Activated B cell treated with CpG ODN at 0.5 μM for 24 hours (primary cell): ENCODE measurements at regions of chr17 and their contacts with region 1.

Region 1: DNA sequence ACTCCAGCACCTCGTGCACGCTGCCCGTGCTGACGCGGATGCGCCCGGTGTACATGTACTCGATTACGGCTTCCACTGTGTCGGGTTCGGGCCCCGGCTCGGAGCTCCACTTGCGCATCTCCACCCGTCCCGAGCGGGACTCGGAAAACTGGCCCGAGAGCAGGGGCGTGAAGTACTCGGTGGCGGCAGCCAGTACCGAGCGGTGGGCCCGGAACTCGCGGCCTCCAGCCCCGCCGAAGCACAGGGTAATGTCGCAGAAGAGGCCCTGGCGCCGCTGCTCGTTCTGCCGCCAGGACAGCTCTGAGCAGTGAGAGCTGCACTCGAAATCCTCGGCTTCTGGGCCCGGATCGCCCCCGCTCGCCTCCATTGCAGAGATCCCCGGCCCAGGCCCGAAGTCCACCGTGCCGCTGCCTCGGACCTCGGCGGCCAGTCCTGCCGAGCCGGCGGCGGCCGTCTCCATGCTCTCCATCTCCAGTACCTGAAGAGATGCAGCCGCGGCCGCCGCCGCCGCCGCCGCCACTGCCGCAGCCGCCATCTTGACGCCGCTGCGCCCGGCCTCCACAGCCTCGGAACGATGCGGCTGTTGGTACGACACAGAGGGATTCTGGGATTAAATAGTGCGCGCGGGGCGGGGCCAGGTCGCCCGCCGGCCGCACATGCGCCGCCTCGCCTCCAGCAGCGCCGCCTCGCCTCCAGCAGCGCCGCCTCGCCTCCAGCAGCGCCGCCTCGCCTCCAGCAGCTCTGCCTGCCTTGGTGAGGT is at the start of gene KLHL11:
- DNase-seq: peak; percentile 84
- ATAC-seq: peak; percentile 95
- H3K4me3 Mint-ChIP-seq: no peak within 1 kb of the TSS
- H3K27ac Mint-ChIP-seq: peak within 1 kb of the TSS; percentile 87
- H3K4me1 Mint-ChIP-seq: peaks cover 19% of the 10 kb centered on the region
- H3K27me3 Mint-ChIP-seq: no peaks in the 10 kb centered on the region
- CTCF ChIP-seq: no peak
- total RNA-seq, gene KLHL11: 13.6 and 17.3 TPM in 2 replicates

Region 2: DNA sequence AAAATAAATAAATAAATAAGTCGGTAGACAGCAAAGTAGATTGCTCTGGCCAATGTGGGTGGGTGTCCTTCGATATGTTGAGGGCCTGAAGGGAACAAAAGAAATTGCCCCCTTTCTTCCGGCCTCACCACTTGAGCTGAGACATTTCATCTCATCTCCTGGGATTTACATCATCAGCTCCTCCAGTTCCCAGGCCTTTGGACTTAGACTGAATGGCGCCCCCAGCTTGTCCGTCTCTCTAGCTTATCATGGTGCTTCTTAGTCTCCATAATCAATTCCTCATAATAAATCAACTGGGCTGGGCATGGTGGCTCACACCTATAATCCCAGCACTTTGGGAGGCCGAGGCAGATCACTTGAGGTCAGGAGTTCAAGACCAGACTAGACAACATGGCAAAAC is 116.7 kb before region 1 on chr17:
- CTCF ChIA-PET with region 1: no interaction called
- POLR2A ChIA-PET with region 1: no interaction called
- intact Hi-C with region 1: no loop called
- DNase-seq: no peak
- ATAC-seq: no peak
- H3K4me3 Mint-ChIP-seq: no peak overlapping the region
- H3K27ac Mint-ChIP-seq: no peak overlapping the region
- H3K4me1 Mint-ChIP-seq: no peaks in the 10 kb centered on the region
- H3K27me3 Mint-ChIP-seq: peaks cover 5% of the 10 kb centered on the region
- CTCF ChIP-seq: no peak

Region 3: GRCh38 chr17:41786227-41787020 is 78.6 kb before region 1 on chr17 and contains the start of gene JUP:
- CTCF ChIA-PET with region 1: no interaction called
- POLR2A ChIA-PET with region 1: interaction called, 8 read pairs
- intact Hi-C with region 1: loop called (anchors 2 kb)
- DNase-seq: peak; percentile 98
- ATAC-seq: peak; percentile 94
- H3K4me3 Mint-ChIP-seq: peak within 1 kb of the TSS; percentile 78
- H3K27ac Mint-ChIP-seq: peak within 1 kb of the TSS; percentile 75
- H3K4me1 Mint-ChIP-seq: peaks cover 57% of the 10 kb centered on the region
- H3K27me3 Mint-ChIP-seq: no peaks in the 10 kb centered on the region
- CTCF ChIP-seq: no peak
- total RNA-seq, gene JUP: 27.3 and 31.1 TPM in 2 replicates

Region 4: DNA sequence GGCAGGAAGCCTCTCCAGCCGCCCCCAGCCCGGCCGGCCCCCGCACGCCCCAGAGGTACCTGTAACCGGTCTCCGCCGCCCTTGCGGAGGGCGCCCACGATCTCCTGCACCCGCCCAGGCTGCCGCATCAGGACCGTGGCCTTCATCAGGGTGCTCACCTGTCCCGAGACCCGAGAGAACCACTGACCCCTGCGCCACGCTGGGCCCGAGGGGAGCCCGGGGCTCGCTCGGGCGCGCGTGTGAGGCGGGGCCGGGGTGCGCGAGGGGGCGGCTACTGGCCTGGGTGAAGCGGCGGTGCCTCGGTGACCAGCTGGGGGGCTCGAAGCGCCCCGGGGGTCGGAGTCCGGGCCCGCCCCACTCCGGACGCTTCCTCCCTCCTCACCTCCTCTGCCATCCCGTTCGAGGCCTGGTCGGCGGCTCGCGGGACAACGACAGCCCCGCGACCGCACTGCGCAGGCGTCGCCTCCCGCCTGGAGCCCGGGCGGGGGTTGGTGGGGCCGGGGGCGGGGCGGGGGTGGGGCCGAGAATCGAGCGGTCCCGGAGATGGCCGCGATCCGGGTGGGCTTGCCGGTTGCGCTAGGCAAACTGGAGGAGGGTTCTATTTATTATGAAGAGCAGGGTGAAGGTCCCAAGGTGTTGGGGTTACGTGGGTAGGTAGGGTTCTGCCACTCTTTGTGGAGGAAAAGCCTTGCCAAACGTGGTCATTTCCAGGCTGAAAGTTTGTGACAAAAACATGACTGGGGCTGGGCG is 29.0 kb before region 1 on chr17 and contains the start of gene NT5C3B:
- CTCF ChIA-PET with region 1: no interaction called
- POLR2A ChIA-PET with region 1: interaction called, 10 read pairs
- intact Hi-C with region 1: no loop called
- DNase-seq: peak; percentile 65
- ATAC-seq: peak; percentile 87
- H3K4me3 Mint-ChIP-seq: peak within 1 kb of the TSS; percentile 87
- H3K27ac Mint-ChIP-seq: peak within 1 kb of the TSS; percentile 41
- H3K4me1 Mint-ChIP-seq: peaks cover 13% of the 10 kb centered on the region
- H3K27me3 Mint-ChIP-seq: no peaks in the 10 kb centered on the region
- CTCF ChIP-seq: no peak
- total RNA-seq, gene NT5C3B: 38.7 and 41.0 TPM in 2 replicates

Region 5: GRCh38 chr17:42155636-42156045 is 290.6 kb after region 1 on chr17:
- CTCF ChIA-PET with region 1: no interaction called
- POLR2A ChIA-PET with region 1: no interaction called
- intact Hi-C with region 1: loop called (anchors 1 kb)
- DNase-seq: no peak
- ATAC-seq: no peak
- H3K4me3 Mint-ChIP-seq: peak overlapping the region; percentile 95
- H3K27ac Mint-ChIP-seq: peak overlapping the region; percentile 92
- H3K4me1 Mint-ChIP-seq: peaks cover 37% of the 10 kb centered on the region
- H3K27me3 Mint-ChIP-seq: no peaks in the 10 kb centered on the region
- CTCF ChIP-seq: no peak